ENCODE measurements at regions of chr4 and their contacts with region 1.

Region 1: GRCh38 chr4:113692809-113693411 is 68.6 kb downstream of the CAMK2D start:
- DNase-seq: no peak
- ATAC-seq: peak; percentile 89
- H3K4me3 ChIP-seq: no peak overlapping the region; the same call in 1 of the 2 replicates
- H3K27ac ChIP-seq: peak overlapping the region; percentile 52
- H3K4me1 ChIP-seq: peaks cover 16% of the 10 kb centered on the region
- H3K27me3 ChIP-seq: no peaks in the 10 kb centered on the region
- CTCF ChIP-seq: no peak
- EP300 ChIP-seq: peak in 1 of 2 experiments; percentile 56; a peak in 1 of 4 replicates
- POLR2A ChIP-seq: no peak
- RAD21 ChIP-seq: no peak

Region 2: GRCh38 chr4:113725963-113726362 is 33.1 kb after region 1 on chr4:
- CTCF ChIA-PET with region 1: interaction called, 3 read pairs
- POLR2A ChIA-PET with region 1: no interaction called
- RAD21 ChIA-PET with region 1: interaction called, 3 read pairs
- SMC1A ChIA-PET with region 1: interaction called, 14 read pairs
- in situ Hi-C with region 1: no loop called
- intact Hi-C with region 1: no loop called
- DNase-seq: no peak
- ATAC-seq: peak; percentile 45
- H3K4me3 ChIP-seq: no peak overlapping the region
- H3K27ac ChIP-seq: no peak overlapping the region
- H3K4me1 ChIP-seq: no peaks in the 10 kb centered on the region
- H3K27me3 ChIP-seq: no peaks in the 10 kb centered on the region
- CTCF ChIP-seq: no peak
- EP300 ChIP-seq: no peak
- POLR2A ChIP-seq: no peak
- RAD21 ChIP-seq: no peak

Region 3: GRCh38 chr4:113908829-113909228 is 215.9 kb after region 1 on chr4:
- CTCF ChIA-PET with region 1: no interaction called
- POLR2A ChIA-PET with region 1: no interaction called
- RAD21 ChIA-PET with region 1: no interaction called
- SMC1A ChIA-PET with region 1: no interaction called
- in situ Hi-C with region 1: no loop called
- intact Hi-C with region 1: no loop called
- DNase-seq: no peak
- ATAC-seq: peak; percentile 52; the same call in 1 of the 3 replicates
- H3K4me3 ChIP-seq: no peak overlapping the region
- H3K27ac ChIP-seq: no peak overlapping the region
- H3K4me1 ChIP-seq: no peaks in the 10 kb centered on the region
- H3K27me3 ChIP-seq: no peaks in the 10 kb centered on the region
- CTCF ChIP-seq: peak in 1 of 3 experiments; percentile 24; a peak in 2 of 6 replicates
- EP300 ChIP-seq: no peak
- POLR2A ChIP-seq: no peak
- RAD21 ChIP-seq: peak; percentile 77